Mammary epithelial cell (primary cell): ENCODE measurements at regions of chr20 and their contacts with region 1.

Region 1: DNA sequence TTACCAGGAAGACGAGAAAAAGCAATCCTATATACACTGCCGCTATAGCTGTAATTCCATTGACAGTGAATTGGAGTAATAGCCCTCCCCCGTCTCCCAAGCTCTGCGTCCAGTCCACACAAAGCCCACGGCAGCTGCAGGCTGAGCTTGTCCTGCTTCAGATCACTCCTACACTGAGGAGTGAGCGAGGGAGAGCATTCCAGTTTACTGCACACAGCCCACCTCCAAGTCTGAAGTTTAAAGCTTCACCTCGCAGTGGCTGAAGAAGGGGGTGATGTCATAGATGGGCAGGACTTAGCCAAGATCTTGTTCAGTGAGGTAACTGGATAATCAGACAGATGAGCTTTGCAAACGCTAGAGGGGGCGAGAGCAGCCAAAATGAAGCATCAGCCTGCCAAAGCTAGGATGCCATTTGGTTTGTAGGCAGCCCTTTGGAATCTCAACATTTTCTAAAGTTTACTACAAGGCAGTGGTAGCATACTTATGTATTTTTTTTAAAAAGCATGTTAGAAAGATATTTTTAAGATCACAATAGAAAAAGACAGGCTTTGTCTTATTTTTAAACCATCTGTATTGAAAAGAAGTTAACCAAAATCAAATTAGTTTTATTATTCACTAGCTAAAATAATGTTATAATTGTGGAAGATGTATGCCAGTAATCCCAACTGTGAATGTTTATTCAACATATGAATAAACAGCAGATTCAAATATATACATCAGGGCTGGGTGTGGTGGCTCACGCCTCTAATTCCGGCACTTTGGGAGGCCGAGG is at the start of gene FLRT3:
- DNase-seq: peak; percentile 98
- H3K4me3 ChIP-seq: peak within 1 kb of the TSS; percentile 81 to 100 (median 97)
- H3K27ac ChIP-seq: peak within 1 kb of the TSS; percentile 98
- H3K4me1 ChIP-seq: no peaks in the 10 kb centered on the region
- H3K27me3 ChIP-seq: no peaks in the 10 kb centered on the region
- CTCF ChIP-seq: peak; percentile 83 to 94
- total RNA-seq, gene FLRT3: 83.4 to 194 TPM

Region 2: GRCh38 chr20:14189794-14190402 is 147.7 kb before region 1 on chr20:
- CTCF ChIA-PET with region 1: interaction called, 10 read pairs
- dilution Hi-C with region 1: no loop called
- in situ Hi-C with region 1: loop called in 1 of 2 experiments (anchors 10 kb)
- intact Hi-C with region 1: loop called (anchors 1 kb)
- DNase-seq: peak; percentile 44
- H3K4me3 ChIP-seq: no peak overlapping the region
- H3K27ac ChIP-seq: no peak overlapping the region
- H3K4me1 ChIP-seq: peaks cover 5% of the 10 kb centered on the region
- H3K27me3 ChIP-seq: no peaks in the 10 kb centered on the region
- CTCF ChIP-seq: peak; percentile 52 to 65

Region 3: GRCh38 chr20:14521436-14521835 is 183.8 kb after region 1 on chr20:
- CTCF ChIA-PET with region 1: interaction called, 5 read pairs
- dilution Hi-C with region 1: no loop called
- in situ Hi-C with region 1: loop called in 1 of 2 experiments (anchors 25 kb)
- intact Hi-C with region 1: loop called (anchors 1 kb)
- DNase-seq: peak; percentile 93
- H3K4me3 ChIP-seq: no peak overlapping the region
- H3K27ac ChIP-seq: peak overlapping the region; percentile 99
- H3K4me1 ChIP-seq: peaks cover 36% of the 10 kb centered on the region
- H3K27me3 ChIP-seq: no peaks in the 10 kb centered on the region
- CTCF ChIP-seq: no peak

Region 4: GRCh38 chr20:14712302-14712739 is 374.7 kb after region 1 on chr20:
- CTCF ChIA-PET with region 1: interaction called, 4 read pairs
- dilution Hi-C with region 1: no loop called
- in situ Hi-C with region 1: loop called in 1 of 2 experiments (anchors 25 kb)
- intact Hi-C with region 1: loop called (anchors 1 kb)
- DNase-seq: peak; percentile 82
- H3K4me3 ChIP-seq: no peak overlapping the region
- H3K27ac ChIP-seq: peak overlapping the region; percentile 64
- H3K4me1 ChIP-seq: peaks cover 25% of the 10 kb centered on the region
- H3K27me3 ChIP-seq: no peaks in the 10 kb centered on the region
- CTCF ChIP-seq: peak in 1 of 2 donors; percentile 1

Region 5: DNA sequence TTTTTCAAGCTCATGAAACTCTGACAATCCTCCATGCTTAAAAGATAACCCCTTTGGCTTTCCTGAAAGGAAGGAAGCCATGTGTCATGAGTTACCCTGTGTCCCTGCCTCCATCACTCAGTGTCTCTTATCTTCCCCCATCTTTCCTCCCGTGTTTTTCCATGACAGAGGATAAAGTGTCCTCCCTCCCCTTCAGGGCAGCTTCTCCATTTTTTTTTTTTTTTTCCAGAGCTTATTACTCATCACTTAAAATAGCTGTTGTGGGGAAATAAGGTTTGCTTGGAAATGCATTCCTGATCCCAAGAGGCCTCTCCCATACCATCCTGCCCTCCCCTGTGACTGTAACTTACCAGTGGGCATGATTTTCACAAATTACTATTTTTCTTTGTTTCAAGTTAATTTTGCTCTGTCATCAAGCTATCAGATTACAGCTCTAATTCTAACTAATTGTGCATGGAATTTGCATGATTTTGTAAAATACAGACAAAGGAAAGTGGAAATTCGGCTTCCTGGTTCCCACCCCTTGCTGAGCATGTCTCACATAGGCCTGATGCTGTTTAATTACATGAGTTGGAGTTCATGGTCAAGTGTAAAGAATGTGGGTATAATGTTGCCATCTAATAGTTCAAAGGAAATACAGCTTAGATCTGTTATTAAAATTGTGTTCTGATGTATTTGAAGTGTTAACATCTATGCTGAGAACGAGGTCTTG is 614.3 kb after region 1 on chr20:
- CTCF ChIA-PET with region 1: no interaction called
- dilution Hi-C with region 1: no loop called
- in situ Hi-C with region 1: loop called in 1 of 2 experiments (anchors 25 kb)
- intact Hi-C with region 1: no loop called
- DNase-seq: peak; percentile 46
- H3K4me3 ChIP-seq: no peak overlapping the region
- H3K27ac ChIP-seq: peak overlapping the region; percentile 25
- H3K4me1 ChIP-seq: peaks cover 12% of the 10 kb centered on the region
- H3K27me3 ChIP-seq: no peaks in the 10 kb centered on the region
- CTCF ChIP-seq: no peak

Region 6: GRCh38 chr20:15220778-15221565 is 883.4 kb after region 1 on chr20:
- CTCF ChIA-PET with region 1: no interaction called
- dilution Hi-C with region 1: no loop called
- in situ Hi-C with region 1: loop called in 1 of 2 experiments (anchors 10 kb)
- intact Hi-C with region 1: loop called (anchors 5 kb)
- DNase-seq: peak; percentile 71
- H3K4me3 ChIP-seq: no peak overlapping the region
- H3K27ac ChIP-seq: peak overlapping the region; percentile 79
- H3K4me1 ChIP-seq: peaks cover 25% of the 10 kb centered on the region
- H3K27me3 ChIP-seq: no peaks in the 10 kb centered on the region
- CTCF ChIP-seq: no peak

Region 7: DNA sequence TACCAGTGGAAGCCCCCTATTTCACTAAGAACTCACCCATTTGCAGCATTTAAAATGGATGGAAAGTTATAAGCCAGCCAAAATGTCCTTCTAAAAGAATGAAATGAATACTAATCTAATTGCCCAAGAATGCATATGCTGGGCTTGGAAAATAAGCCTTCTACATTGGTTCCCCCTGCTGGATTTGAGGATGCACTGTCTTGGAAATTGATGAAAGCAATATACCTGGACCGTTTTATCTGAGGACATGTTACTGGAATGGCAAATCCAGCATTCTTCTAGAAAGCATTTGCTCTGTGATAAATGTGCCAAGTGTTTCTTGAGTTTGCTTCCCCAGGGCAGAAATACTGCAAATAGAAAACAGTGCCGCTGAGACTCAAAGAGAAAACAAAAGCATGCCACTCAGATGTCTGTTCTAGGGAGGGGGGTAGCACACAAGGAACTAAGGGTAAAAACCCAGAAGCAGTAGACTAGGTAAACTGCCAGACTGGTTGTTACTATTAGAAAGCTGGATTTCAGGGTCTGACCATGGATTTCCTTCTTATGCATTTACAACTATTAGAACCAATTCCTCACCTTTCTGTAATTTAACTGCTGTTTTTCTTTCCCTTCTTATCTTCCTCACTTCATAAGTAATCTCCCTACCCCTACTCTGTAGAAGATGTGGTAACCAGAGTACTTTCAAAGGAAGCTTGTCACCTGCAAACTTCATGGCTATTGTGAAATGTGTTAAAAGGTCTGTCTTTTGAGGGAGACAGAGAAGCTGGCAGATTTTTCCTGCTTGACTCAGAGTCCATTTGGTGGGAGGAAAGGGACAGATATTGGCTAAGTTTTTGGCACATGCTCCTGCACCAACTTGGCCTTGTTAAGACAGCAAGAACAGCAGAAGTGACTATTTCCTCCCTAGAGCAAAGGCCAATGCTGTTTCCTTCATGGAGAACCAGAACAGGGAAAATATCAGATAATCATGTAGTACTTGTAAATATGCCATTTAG is 1593.0 kb after region 1 on chr20:
- CTCF ChIA-PET with region 1: no interaction called
- dilution Hi-C with region 1: no loop called
- in situ Hi-C with region 1: loop called in 1 of 2 experiments (anchors 25 kb)
- intact Hi-C with region 1: loop called (anchors 2 kb)
- DNase-seq: peak; percentile 61
- H3K4me3 ChIP-seq: no peak overlapping the region
- H3K27ac ChIP-seq: no peak overlapping the region
- H3K4me1 ChIP-seq: peaks cover 12% of the 10 kb centered on the region
- H3K27me3 ChIP-seq: no peaks in the 10 kb centered on the region
- CTCF ChIP-seq: peak; percentile 78 to 81